ENCODE measurements at regions of chr17 and their contacts with region 1.

Region 1: GRCh38 chr17:37047631-37048104 is 98.9 kb downstream of the AATF start:
- DNase-seq: peak; percentile 69 to 97 (median 89)

Region 2: DNA sequence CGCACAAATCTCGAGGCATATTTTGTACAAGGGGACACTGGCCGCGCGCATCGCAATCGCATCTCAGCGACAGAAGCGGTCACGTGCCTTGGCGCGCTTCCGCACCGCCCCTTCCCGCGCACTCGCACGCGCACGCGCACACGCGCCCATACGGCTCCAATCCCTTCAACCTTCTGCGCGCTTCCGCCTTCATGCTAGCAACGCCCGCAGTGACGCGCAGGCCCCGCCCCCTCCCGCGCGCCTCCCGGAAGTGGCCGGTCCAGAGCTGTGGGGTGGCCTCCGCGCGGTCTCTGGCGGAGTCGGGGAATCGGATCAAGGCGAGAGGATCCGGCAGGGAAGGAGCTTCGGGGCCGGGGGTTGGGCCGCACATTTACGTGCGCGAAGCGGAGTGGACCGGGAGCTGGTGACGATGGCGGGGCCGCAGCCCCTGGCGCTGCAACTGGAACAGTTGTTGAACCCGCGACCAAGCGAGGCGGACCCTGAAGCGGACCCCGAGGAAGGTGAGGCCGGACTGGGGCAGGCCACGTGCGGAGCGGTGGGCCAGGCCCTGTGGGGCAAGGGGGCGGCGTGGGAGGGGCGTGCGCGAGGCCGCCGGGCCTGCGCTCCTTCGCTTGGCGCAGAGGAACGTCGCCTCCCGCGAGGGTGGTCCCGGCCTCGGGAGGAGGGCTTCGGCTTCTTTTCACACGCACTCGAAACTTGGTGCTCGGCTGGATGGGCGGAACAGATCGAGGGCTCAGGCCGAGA is 98.8 kb before region 1 on chr17 and contains the start of gene AATF:
- intact Hi-C with region 1: loop called (anchors 2 kb)
- DNase-seq: peak; percentile 92 to 99 (median 96)

Measured in posterior cingulate gyrus (tissue), 11 donors.